Mammary epithelial cell (primary cell): ENCODE measurements at regions of chr17 and their contacts with region 1.

Region 1: DNA sequence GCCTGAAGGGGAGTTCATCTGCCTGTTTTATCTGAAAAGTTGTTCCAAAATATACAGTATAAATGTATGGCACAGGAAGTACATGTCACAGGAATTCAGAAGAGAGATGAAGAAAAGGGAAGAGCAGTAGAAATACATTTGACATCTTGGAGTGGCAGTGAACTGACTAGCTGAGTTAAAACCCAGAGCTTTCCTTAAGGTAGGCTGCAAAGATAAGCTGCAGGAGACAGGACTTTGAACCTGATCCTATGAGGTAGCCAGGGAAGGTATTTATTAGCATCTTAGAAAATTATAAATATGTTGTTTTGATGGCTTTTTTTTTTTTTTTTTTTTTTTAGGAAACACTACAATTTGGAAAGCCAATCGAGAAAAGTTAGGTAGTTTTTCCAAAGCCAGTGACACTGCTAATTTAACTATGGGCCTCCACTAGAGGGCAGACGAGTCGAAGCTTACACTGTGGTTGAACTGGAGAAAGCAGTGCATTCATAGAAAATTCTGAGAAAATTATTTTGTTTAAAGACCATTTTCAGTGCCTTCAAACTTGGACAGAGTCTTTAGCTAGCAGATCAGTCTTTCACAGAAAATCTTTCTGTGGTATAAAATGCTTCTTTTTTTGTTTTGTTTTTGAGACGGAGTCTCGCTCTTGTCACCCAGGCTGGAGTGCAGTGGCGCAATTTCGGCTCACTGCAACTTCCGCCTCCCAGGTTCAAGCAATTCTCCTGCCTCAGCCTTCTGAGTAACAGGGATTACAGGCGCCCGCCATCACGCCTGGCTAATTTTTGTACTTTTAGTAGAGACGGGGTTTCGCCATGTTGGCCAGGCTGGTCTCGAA is 122.3 kb downstream of the SSH2 start:
- DNase-seq: peak; percentile 34
- H3K4me3 ChIP-seq: no peak overlapping the region
- H3K27ac ChIP-seq: no peak overlapping the region
- H3K4me1 ChIP-seq: peaks cover 11% of the 10 kb centered on the region
- H3K27me3 ChIP-seq: no peaks in the 10 kb centered on the region
- CTCF ChIP-seq: peak; percentile 76 to 83

Region 2: DNA sequence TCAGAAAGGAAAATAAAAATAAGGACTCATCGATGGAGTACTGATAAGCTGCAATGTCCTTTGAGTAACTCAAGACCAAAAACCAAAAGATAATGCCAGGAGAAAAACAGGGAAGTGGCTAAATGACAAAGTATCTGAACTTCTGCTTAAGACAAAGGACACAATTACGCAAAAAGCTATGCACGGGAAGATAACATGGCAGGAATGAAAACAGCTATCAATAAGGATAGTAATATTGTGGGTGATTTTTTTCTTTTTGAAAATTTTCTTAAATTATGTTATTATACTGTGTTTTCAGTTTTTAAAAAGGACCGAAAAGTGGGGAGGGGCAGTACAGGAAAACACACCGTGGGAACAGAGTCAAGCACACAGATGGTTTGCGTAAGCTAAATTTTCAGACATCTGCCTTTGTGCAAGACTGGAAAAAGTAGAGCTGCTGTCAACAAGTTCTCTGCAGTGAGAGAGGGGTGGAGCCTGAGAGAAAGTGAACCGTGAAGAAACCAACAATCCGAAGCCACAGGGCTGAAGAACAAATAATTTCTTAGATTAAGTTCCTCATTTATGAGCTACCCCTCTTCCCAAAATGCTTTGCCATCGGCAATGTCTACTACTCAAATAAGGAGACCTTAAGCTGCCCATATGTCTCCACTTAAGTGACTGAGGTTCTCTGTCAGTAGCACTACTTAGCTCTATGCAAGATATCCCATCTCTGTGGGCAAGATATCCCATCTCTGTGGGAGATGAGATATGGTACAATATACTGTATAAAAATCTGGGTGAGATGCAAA is 85.1 kb before region 1 on chr17:
- CTCF ChIA-PET with region 1: no interaction called
- dilution Hi-C with region 1: no loop called
- in situ Hi-C with region 1: no loop called
- intact Hi-C with region 1: no loop called
- DNase-seq: no peak
- H3K4me3 ChIP-seq: no peak overlapping the region
- H3K27ac ChIP-seq: no peak overlapping the region
- H3K4me1 ChIP-seq: peaks cover 11% of the 10 kb centered on the region
- H3K27me3 ChIP-seq: no peaks in the 10 kb centered on the region
- CTCF ChIP-seq: no peak

Region 3: DNA sequence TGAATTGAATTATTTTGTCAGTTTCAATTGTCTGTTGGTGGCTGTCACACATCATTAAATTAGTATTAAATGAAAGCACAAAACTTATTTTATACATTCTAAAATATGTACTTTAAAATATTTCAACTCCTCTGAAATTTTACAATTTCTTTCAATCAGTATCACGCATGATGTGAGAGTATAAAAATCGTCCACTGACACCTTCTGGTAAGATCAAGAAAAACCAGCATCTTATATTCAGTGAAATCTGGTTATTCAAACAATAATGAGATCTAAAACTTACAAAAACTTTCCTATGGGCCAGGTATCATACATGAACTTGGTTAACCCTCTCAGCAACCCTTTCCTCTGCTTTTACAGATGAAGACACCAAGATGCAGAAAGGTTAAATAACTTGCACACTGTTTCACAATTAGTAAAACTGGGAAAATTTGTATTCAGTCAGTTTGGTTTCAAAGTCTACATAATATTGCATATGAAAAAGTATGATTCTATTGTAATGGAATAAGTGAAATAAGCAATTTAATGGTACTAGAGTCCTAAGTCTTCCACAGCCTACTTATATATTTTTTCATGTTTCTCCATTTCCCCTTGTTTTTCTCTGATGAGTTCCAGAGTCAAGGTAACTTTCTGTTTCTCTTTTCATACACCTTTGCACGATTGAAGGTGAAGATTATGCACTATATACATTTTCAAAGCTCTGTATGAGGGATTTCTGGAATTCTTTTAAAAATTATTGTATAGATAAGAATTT is 192.4 kb after region 1 on chr17:
- CTCF ChIA-PET with region 1: no interaction called
- dilution Hi-C with region 1: no loop called
- in situ Hi-C with region 1: no loop called
- intact Hi-C with region 1: loop called (anchors 5 kb)
- DNase-seq: no peak
- H3K4me3 ChIP-seq: no peak overlapping the region
- H3K27ac ChIP-seq: no peak overlapping the region
- H3K4me1 ChIP-seq: peaks cover 12% of the 10 kb centered on the region
- H3K27me3 ChIP-seq: no peaks in the 10 kb centered on the region
- CTCF ChIP-seq: peak in 1 of 2 donors; percentile 15